Activated CD4-positive, alpha-beta memory T cell treated with anti-CD3 and anti-CD28 coated beads for 36 hours (primary cell): ENCODE measurements at regions of chr20 and their contacts with region 1.

Region 1: DNA sequence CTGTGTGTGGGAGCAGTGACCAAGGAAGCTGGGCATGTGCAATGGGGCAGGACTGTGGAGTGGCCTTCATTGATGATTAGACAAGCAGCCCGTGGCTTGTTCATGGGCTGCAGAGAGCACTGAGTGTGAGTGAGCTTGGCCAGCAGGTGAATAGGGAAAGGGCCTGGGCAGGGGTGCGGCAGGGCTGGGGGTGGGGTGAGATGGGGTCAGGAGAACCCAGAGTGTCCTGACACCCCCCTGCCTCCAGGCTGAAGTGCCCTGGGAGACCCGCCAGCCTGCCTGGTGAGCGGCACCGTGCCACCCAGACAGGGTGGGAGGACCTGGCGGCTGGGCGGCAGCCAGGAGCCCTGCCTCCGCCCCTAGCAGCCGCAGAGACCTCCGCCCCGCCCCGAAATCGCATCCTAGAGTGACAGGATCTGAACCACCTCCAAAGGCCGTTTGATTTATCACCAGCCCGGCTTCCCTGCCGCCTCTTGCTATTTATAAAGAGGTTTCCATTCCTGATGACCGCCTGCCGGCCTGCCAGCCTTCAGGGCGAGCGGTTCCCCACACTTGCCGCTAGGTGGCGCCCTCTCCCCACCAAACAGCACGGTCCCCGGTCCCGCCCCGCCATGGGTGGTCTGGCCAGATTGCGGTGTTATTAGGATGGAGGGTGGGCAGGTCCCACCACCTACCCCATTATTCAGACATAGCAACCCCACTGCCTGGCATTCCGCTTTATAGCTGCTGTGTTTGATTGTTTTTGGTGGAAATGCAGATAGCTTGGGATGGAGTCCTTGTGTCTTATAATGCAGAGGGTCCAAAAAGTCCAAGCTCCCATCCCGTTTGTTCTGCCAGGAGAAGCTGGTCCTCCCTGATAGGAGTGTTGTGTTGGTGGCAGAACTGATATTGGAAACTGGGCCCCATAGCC is 3.5 kb downstream of the MYLK2 start:
- DNase-seq: peak; percentile 81
- H3K4me3 Mint-ChIP-seq: no peak overlapping the region
- H3K27ac Mint-ChIP-seq: no peak overlapping the region
- H3K4me1 Mint-ChIP-seq: peaks cover 5% of the 10 kb centered on the region
- H3K27me3 Mint-ChIP-seq: no peaks in the 10 kb centered on the region

Region 2: DNA sequence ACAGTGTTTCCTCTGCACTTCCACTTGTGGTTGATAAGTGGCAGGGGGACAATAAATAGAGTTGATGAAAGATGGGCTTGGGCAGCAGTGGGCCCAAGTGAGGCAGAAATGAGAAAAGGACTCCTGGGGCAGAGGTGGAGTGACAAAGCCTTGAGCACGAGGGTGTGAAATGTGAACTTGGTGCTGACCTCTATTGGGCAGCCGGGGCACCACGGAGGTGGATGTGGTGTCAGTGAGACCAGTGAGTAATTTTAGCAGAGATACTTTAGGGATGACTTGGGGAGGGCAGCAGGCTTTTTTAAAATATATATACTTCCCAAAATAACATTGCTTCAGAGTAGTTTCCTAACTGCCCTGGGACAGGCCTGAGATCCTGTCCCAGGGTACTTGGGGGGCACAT is 34.1 kb before region 1 on chr20:
- CTCF ChIA-PET with region 1: no interaction called
- POLR2A ChIA-PET with region 1: no interaction called
- intact Hi-C with region 1: no loop called
- DNase-seq: peak; percentile 13
- H3K4me3 Mint-ChIP-seq: no peak overlapping the region
- H3K27ac Mint-ChIP-seq: no peak overlapping the region
- H3K4me1 Mint-ChIP-seq: no peaks in the 10 kb centered on the region
- H3K27me3 Mint-ChIP-seq: no peaks in the 10 kb centered on the region

Region 3: DNA sequence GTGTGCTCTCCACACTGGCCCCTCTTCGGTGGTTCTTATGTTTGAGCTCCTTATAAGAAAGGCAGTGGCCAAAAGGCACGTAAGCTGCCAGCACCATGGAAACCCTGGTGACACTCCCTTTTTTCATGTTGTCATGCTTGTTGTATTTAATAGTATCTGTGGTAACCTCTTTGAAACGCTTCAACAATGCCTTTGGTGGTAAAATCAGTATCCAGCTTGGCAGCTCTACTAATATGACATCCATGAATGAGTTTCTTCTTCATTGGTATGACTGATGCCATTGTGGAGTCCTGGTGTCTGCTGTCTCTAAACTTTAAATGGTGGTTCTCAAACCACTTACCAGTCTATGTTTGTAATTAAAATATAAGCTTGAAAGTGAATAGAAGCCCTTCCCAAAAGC is 14.2 kb before region 1 on chr20:
- CTCF ChIA-PET with region 1: interaction called, 14 read pairs
- POLR2A ChIA-PET with region 1: no interaction called
- intact Hi-C with region 1: no loop called
- DNase-seq: no peak
- H3K4me3 Mint-ChIP-seq: no peak overlapping the region
- H3K27ac Mint-ChIP-seq: no peak overlapping the region
- H3K4me1 Mint-ChIP-seq: peaks cover 10% of the 10 kb centered on the region
- H3K27me3 Mint-ChIP-seq: no peaks in the 10 kb centered on the region

Region 4: GRCh38 chr20:31835977-31836852 is 13.5 kb after region 1 on chr20:
- CTCF ChIA-PET with region 1: interaction called, 16 read pairs
- POLR2A ChIA-PET with region 1: no interaction called
- intact Hi-C with region 1: no loop called
- DNase-seq: peak; percentile 51
- H3K4me3 Mint-ChIP-seq: no peak overlapping the region
- H3K27ac Mint-ChIP-seq: no peak overlapping the region
- H3K4me1 Mint-ChIP-seq: peaks cover 7% of the 10 kb centered on the region
- H3K27me3 Mint-ChIP-seq: no peaks in the 10 kb centered on the region

Region 5: GRCh38 chr20:31845300-31845863 is 22.7 kb after region 1 on chr20 and contains the start of gene FOXS1:
- CTCF ChIA-PET with region 1: interaction called, 56 read pairs
- POLR2A ChIA-PET with region 1: no interaction called
- intact Hi-C with region 1: loop called (anchors 1 kb)
- DNase-seq: no peak
- H3K4me3 Mint-ChIP-seq: no peak within 1 kb of the TSS
- H3K27ac Mint-ChIP-seq: no peak within 1 kb of the TSS
- H3K4me1 Mint-ChIP-seq: no peaks in the 10 kb centered on the region
- H3K27me3 Mint-ChIP-seq: peaks cover 3% of the 10 kb centered on the region
- total RNA-seq, gene FOXS1: not detected

Region 6: GRCh38 chr20:32052090-32052777 is 229.6 kb after region 1 on chr20 and contains the start of gene HCK:
- CTCF ChIA-PET with region 1: no interaction called
- POLR2A ChIA-PET with region 1: no interaction called
- intact Hi-C with region 1: no loop called
- DNase-seq: no peak
- H3K4me3 Mint-ChIP-seq: peak within 1 kb of the TSS; percentile 42
- H3K27ac Mint-ChIP-seq: no peak within 1 kb of the TSS
- H3K4me1 Mint-ChIP-seq: peaks cover 15% of the 10 kb centered on the region
- H3K27me3 Mint-ChIP-seq: peaks cover 59% of the 10 kb centered on the region
- total RNA-seq, gene HCK: not detected

Region 7: GRCh38 chr20:32091888-32092346 is 269.2 kb after region 1 on chr20:
- CTCF ChIA-PET with region 1: interaction called, 46 read pairs
- POLR2A ChIA-PET with region 1: no interaction called
- intact Hi-C with region 1: loop called (anchors 5 kb)
- DNase-seq: peak; percentile 86
- H3K4me3 Mint-ChIP-seq: no peak overlapping the region
- H3K27ac Mint-ChIP-seq: no peak overlapping the region
- H3K4me1 Mint-ChIP-seq: peaks cover 2% of the 10 kb centered on the region
- H3K27me3 Mint-ChIP-seq: peaks cover 3% of the 10 kb centered on the region

Region 8: GRCh38 chr20:32727683-32728082 is 905.0 kb after region 1 on chr20:
- CTCF ChIA-PET with region 1: no interaction called
- POLR2A ChIA-PET with region 1: no interaction called
- intact Hi-C with region 1: no loop called
- DNase-seq: no peak
- H3K4me3 Mint-ChIP-seq: no peak overlapping the region
- H3K27ac Mint-ChIP-seq: no peak overlapping the region
- H3K4me1 Mint-ChIP-seq: peaks cover 12% of the 10 kb centered on the region
- H3K27me3 Mint-ChIP-seq: no peaks in the 10 kb centered on the region